Gastrocnemius medialis (tissue), 4 donors: ENCODE measurements at regions of chr16 and their contacts with region 1.

Region 1: GRCh38 chr16:49592546-49593423 is 219.2 kb downstream of the C16orf78 start:
- DNase-seq: no peak
- ATAC-seq: no peak
- H3K4me3 ChIP-seq: no peak overlapping the region
- H3K27ac ChIP-seq: no peak overlapping the region
- H3K4me1 ChIP-seq: peaks cover 19 to 27% of the 10 kb centered on the region in 2 donors
- H3K27me3 ChIP-seq: no peaks in the 10 kb centered on the region
- CTCF ChIP-seq: peak; percentile 58 to 79 (median 74)
- POLR2A ChIP-seq: no peak

Region 2: GRCh38 chr16:49407873-49408550 is 184.8 kb before region 1 on chr16:
- in situ Hi-C with region 1: loop called in 2 of 4 experiments (anchors 10 to 25 kb)
- intact Hi-C with region 1: loop called (anchors 1 kb)
- DNase-seq: peak; percentile 57 to 73
- ATAC-seq: peak; percentile 88 to 92
- H3K4me3 ChIP-seq: no peak overlapping the region
- H3K27ac ChIP-seq: no peak overlapping the region
- H3K4me1 ChIP-seq: peaks cover 0 to 3% of the 10 kb centered on the region in 2 donors
- H3K27me3 ChIP-seq: peaks cover 0 to 5% (median 0%) of the 10 kb centered on the region in 3 donors
- CTCF ChIP-seq: peak; percentile 85 to 95 (median 88)
- POLR2A ChIP-seq: no peak

Region 3: GRCh38 chr16:49491771-49492761 is 100.7 kb before region 1 on chr16:
- in situ Hi-C with region 1: no loop called
- intact Hi-C with region 1: loop called (anchors 2 kb)
- DNase-seq: no peak
- ATAC-seq: peak; percentile 68 to 76
- H3K4me3 ChIP-seq: peak overlapping the region; percentile 46 to 63 (median 48)
- H3K27ac ChIP-seq: peak overlapping the region in 3 of 4 donors; percentile 11 to 47 (median 45)
- H3K4me1 ChIP-seq: peaks cover 5 to 8% of the 10 kb centered on the region in 2 donors
- H3K27me3 ChIP-seq: no peaks in the 10 kb centered on the region
- CTCF ChIP-seq: peak; percentile 80 to 98 (median 91)
- POLR2A ChIP-seq: no peak

Region 4: DNA sequence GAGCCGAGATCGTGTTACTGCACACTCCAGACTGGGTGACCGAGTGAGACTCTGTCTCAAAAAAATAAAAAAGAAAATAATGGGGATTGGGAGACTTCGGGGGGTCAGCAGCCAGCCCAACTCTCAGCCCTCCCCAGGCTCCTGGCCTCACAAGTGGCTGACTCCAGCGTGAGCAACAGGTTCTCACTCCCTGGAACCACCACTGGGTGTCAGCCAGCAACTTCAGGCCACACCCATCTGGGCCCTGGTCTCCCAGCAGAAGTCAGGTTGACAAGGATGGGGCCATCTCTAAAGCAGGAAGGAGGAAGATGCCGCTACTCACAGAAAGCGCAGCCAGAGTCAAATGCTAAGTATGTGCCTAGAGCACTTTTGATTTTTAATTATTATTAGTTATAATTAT is 79.7 kb before region 1 on chr16:
- in situ Hi-C with region 1: no loop called
- intact Hi-C with region 1: loop called (anchors 5 kb)
- DNase-seq: peak in 1 of 2 donors; percentile 47
- ATAC-seq: no peak
- H3K4me3 ChIP-seq: no peak overlapping the region
- H3K27ac ChIP-seq: no peak overlapping the region
- H3K4me1 ChIP-seq: peaks cover 24 to 26% of the 10 kb centered on the region in 2 donors
- H3K27me3 ChIP-seq: no peaks in the 10 kb centered on the region
- CTCF ChIP-seq: peak in 1 of 5 experiments; percentile 31
- POLR2A ChIP-seq: no peak